ENCODE measurements at regions of chr9 and their contacts with region 1.

Region 1: DNA sequence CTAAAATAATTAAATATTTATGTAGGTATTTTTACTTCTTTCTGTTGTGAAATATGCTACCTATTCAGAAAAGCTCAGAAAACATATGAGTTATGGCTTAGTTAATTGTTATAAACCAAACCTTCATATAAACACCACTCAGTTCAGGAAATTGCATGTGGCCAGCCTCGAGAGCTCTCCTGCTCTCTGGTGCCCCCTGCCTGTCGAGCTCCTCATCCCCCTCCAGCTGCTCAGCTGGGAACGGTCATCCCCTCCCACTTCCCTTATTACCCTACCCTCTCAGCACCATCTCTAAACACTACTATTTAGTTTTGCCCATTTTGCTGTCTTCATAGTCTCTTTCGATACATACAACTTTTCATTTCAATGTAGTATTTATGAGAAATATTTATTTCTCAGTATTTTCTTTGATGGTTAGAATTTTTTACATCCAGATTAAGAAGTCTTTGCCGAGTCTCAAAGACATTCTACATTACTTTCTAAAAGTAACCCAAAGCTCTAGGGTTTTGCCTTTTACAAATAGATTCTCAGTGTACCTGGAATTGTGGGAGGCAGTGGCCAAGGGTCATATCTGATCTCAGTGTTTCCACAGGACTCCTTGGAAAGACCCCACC is 51.2 kb upstream of the SEMA4D start:
- DNase-seq: peak; percentile 72 to 92 (median 87)
- ATAC-seq: peak; percentile 98
- H3K4me3 ChIP-seq: no peak overlapping the region
- H3K4me3 Mint-ChIP-seq: no peak overlapping the region
- H3K27ac ChIP-seq: no peak overlapping the region
- H3K27ac Mint-ChIP-seq: peak overlapping the region; percentile 60
- H3K4me1 ChIP-seq: peaks cover 15% of the 10 kb centered on the region
- H3K4me1 Mint-ChIP-seq: peaks cover 23% of the 10 kb centered on the region
- H3K27me3 ChIP-seq: no peaks in the 10 kb centered on the region
- H3K27me3 Mint-ChIP-seq: no peaks in the 10 kb centered on the region
- CTCF ChIP-seq: peak; percentile 99

Region 2: DNA sequence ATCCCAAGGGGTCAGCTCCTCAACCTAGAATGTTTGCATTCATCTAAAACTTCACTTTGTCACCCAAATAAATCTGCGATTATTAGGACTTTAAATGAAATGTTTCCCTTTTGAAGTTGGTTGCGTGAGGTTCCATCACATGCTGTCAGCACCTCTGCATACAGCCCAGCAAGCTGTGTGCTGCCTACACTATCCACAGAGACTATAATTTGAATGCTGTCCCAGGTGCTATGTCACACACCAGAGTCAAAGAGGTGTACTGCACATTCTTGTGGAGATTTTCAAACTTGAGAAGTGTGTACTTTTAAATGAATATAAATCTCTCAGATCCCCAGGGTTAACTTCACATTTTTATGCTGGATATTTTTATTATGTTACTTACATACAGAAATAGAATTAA is 257.4 kb before region 1 on chr9:
- CTCF ChIA-PET with region 1: no interaction called
- POLR2A ChIA-PET with region 1: no interaction called
- intact Hi-C with region 1: no loop called
- DNase-seq: no peak
- ATAC-seq: no peak
- H3K4me3 ChIP-seq: no peak overlapping the region
- H3K4me3 Mint-ChIP-seq: no peak overlapping the region
- H3K27ac ChIP-seq: no peak overlapping the region
- H3K27ac Mint-ChIP-seq: no peak overlapping the region
- H3K4me1 ChIP-seq: no peaks in the 10 kb centered on the region
- H3K4me1 Mint-ChIP-seq: no peaks in the 10 kb centered on the region
- H3K27me3 ChIP-seq: no peaks in the 10 kb centered on the region
- H3K27me3 Mint-ChIP-seq: peaks cover 2% of the 10 kb centered on the region
- CTCF ChIP-seq: no peak

Region 3: DNA sequence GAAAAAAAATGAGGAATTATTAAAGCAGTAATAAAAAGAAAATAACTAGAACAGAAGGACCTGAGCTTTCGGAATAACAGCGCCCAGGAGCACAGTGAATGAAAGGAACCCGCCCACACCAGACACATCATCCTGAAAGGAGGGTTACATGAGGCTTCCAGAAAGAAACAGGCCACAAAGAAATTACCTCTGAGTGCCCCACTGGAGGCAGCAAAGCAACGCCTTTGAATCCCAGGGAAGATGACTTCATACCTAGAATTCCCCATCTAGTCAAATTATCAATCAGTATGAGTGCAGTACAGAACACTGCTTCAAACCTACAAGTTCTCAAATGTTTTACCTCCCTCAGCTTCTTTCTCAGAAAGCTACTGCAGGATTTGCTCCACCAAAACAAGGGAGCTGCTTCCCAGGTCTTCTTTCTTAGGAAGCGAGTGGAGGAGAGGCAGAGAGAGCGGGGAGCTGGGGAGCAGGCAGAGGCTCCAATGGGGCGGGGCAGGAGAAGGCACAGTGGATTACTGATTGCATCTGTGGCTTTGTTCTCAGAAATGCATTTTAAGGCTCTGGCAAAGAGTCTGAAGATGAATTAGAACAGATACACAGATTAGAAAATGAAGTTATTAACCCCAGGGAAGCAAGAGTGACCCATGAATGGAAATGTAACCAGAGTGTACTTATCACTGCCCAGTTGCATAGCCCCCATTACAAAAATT is 138.3 kb before region 1 on chr9:
- CTCF ChIA-PET with region 1: interaction called, 50 read pairs
- POLR2A ChIA-PET with region 1: interaction called, 3 read pairs
- intact Hi-C with region 1: no loop called
- DNase-seq: peak in 3 of 9 experiments; percentile 23 to 72 (median 54)
- ATAC-seq: peak; percentile 30
- H3K4me3 ChIP-seq: no peak overlapping the region
- H3K4me3 Mint-ChIP-seq: peak overlapping the region; percentile 22
- H3K27ac ChIP-seq: peak overlapping the region in 1 of 2 experiments; percentile 29
- H3K27ac Mint-ChIP-seq: peak overlapping the region; percentile 84
- H3K4me1 ChIP-seq: peaks cover 62% of the 10 kb centered on the region
- H3K4me1 Mint-ChIP-seq: peaks cover 85% of the 10 kb centered on the region
- H3K27me3 ChIP-seq: no peaks in the 10 kb centered on the region
- H3K27me3 Mint-ChIP-seq: no peaks in the 10 kb centered on the region
- CTCF ChIP-seq: no peak

Region 4: DNA sequence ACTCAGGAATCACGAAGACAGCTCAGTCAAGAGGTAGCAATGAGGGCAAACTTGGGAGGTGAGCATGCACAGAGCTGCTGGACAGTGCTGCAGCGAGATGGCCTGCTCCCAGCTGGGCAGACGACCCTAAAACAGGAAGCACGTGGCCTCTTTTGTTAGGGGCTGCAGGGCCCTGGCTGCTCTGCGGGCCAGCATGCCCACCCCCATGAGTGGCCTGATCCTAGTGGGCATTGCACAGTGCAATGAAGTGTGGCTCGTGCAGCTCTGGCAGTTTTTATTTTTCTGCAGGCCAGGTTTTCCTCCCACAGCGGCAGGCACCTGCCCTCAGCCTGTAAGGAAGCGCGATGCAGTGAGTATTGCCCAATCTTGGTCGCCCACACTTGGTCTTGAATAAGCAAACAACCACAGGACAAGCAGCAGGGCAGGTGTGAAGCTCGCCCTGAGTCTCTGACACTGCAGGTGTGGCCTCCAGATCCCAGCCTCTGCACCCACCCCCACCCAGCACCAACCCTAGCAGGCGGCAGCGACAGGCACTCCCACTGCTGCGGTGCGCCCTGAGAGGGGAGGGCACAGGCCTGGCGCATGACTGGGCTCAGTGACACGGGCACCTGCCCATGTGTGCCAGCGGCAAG is 112.0 kb before region 1 on chr9:
- CTCF ChIA-PET with region 1: interaction called, 128 read pairs
- POLR2A ChIA-PET with region 1: interaction called, 9 read pairs
- intact Hi-C with region 1: no loop called
- DNase-seq: peak; percentile 45 to 91 (median 74)
- ATAC-seq: peak; percentile 91
- H3K4me3 ChIP-seq: peak overlapping the region in 1 of 2 experiments; percentile 13
- H3K4me3 Mint-ChIP-seq: peak overlapping the region; percentile 64
- H3K27ac ChIP-seq: peak overlapping the region; percentile 19 to 66
- H3K27ac Mint-ChIP-seq: peak overlapping the region; percentile 98
- H3K4me1 ChIP-seq: peaks cover 98% of the 10 kb centered on the region
- H3K4me1 Mint-ChIP-seq: peaks cover 89% of the 10 kb centered on the region
- H3K27me3 ChIP-seq: no peaks in the 10 kb centered on the region
- H3K27me3 Mint-ChIP-seq: no peaks in the 10 kb centered on the region
- CTCF ChIP-seq: no peak

Region 5: DNA sequence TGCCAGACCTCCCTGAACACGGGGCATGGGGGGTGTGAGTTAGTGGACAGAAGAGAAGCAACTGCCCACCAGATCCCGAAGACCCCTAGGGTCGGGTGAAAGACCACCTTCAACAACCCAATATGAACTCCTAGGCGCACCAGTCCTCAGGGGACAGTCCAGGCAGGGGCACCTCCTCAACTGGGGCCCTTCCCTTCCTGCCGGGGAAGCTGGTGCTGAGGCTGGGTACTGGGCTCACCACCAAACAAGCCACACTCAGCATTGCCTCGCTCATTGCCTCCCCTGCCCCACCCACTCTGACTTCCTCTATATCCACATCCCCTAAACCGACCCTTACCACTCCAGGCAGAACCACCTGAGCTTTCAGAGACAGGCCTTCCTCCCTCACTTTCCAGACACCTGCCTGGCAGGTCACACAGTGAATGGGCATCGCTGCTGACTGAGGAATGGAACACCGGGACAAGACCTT is 93.7 kb before region 1 on chr9:
- CTCF ChIA-PET with region 1: interaction called, 47 read pairs
- POLR2A ChIA-PET with region 1: interaction called, 18 read pairs
- intact Hi-C with region 1: no loop called
- DNase-seq: peak in 7 of 9 experiments; percentile 46 to 78 (median 56)
- ATAC-seq: peak; percentile 53
- H3K4me3 ChIP-seq: peak overlapping the region in 1 of 2 experiments; percentile 7
- H3K4me3 Mint-ChIP-seq: peak overlapping the region; percentile 61
- H3K27ac ChIP-seq: peak overlapping the region; percentile 47 to 69
- H3K27ac Mint-ChIP-seq: peak overlapping the region; percentile 98
- H3K4me1 ChIP-seq: peaks cover 90% of the 10 kb centered on the region
- H3K4me1 Mint-ChIP-seq: peaks cover 94% of the 10 kb centered on the region
- H3K27me3 ChIP-seq: no peaks in the 10 kb centered on the region
- H3K27me3 Mint-ChIP-seq: no peaks in the 10 kb centered on the region
- CTCF ChIP-seq: no peak

Region 6: GRCh38 chr9:89477811-89478630 is 71.1 kb before region 1 on chr9:
- CTCF ChIA-PET with region 1: interaction called, 36 read pairs
- POLR2A ChIA-PET with region 1: interaction called, 17 read pairs
- intact Hi-C with region 1: no loop called
- DNase-seq: peak in 6 of 9 experiments; percentile 36 to 72 (median 66)
- ATAC-seq: peak; percentile 35
- H3K4me3 ChIP-seq: peak overlapping the region; percentile 44 to 50
- H3K4me3 Mint-ChIP-seq: peak overlapping the region; percentile 91
- H3K27ac ChIP-seq: peak overlapping the region; percentile 26 to 65
- H3K27ac Mint-ChIP-seq: peak overlapping the region; percentile 99
- H3K4me1 ChIP-seq: peaks cover 82% of the 10 kb centered on the region
- H3K4me1 Mint-ChIP-seq: peaks cover 90% of the 10 kb centered on the region
- H3K27me3 ChIP-seq: no peaks in the 10 kb centered on the region
- H3K27me3 Mint-ChIP-seq: no peaks in the 10 kb centered on the region
- CTCF ChIP-seq: no peak

Region 7: GRCh38 chr9:89497978-89498851 is 50.9 kb before region 1 on chr9 and contains the start of gene SEMA4D:
- CTCF ChIA-PET with region 1: interaction called, 54 read pairs
- POLR2A ChIA-PET with region 1: interaction called, 4 read pairs
- intact Hi-C with region 1: loop called (anchors 2 to 5 kb)
- DNase-seq: peak in 7 of 9 experiments; percentile 40 to 86 (median 58)
- ATAC-seq: no peak
- H3K4me3 ChIP-seq: peak within 1 kb of the TSS; percentile 78 to 82
- H3K4me3 Mint-ChIP-seq: peak within 1 kb of the TSS; percentile 94
- H3K27ac ChIP-seq: peak within 1 kb of the TSS; percentile 77
- H3K27ac Mint-ChIP-seq: peak within 1 kb of the TSS; percentile 99
- H3K4me1 ChIP-seq: peaks cover 84% of the 10 kb centered on the region
- H3K4me1 Mint-ChIP-seq: peaks cover 88% of the 10 kb centered on the region
- H3K27me3 ChIP-seq: no peaks in the 10 kb centered on the region
- H3K27me3 Mint-ChIP-seq: no peaks in the 10 kb centered on the region
- CTCF ChIP-seq: no peak
- total RNA-seq, gene SEMA4D: 286 to 305 TPM

Measured in CD8-positive, alpha-beta T cell (primary cell).